K562 (cell line): ENCODE measurements at regions of chr1 and their contacts with region 1.

Region 1: DNA sequence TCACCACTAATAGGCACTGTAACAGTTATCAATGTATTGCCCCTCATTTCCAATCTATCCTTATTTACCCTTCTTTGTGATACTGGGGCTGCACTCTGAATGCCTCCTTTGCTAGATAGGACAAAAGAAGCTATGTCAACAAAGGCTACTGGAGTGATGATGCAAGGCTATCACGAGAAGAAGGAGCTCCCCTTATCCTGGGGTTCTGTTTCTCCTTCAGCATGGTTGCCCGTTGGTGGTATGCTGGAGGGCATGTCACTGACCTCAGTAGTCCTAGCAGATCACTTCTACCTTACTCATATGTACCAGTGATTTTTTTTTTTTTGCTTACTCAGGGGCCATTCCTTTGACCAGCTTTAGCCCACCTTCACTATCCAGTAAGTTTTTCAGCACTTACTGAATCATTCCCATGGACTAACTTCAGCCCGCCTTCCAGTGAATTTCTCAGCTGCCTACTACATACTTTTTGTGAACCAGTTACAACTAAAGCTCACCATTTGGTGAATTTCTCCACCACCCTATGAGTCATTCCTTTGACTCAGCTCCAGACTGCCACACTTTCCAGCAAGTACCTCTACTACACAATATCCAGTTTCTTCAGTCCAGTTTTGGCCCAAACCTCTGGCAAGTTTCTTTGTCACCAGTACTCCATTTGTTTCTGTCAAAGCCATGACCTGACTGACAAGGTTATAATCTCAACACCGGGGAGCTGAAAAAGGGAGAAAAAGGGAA is 944.5 kb downstream of the KCNT2 start:
- DNase-seq: peak in 1 of 4 experiments; percentile 16
- ATAC-seq: no peak
- H3K4me3 ChIP-seq: no peak overlapping the region
- H3K27ac ChIP-seq: no peak overlapping the region
- H3K4me1 ChIP-seq: no peaks in the 10 kb centered on the region
- H3K27me3 ChIP-seq: no peaks in the 10 kb centered on the region
- CTCF ChIP-seq: no peak
- EP300 ChIP-seq: no peak
- POLR2A ChIP-seq: no peak
- RAD21 ChIP-seq: no peak

Region 2: DNA sequence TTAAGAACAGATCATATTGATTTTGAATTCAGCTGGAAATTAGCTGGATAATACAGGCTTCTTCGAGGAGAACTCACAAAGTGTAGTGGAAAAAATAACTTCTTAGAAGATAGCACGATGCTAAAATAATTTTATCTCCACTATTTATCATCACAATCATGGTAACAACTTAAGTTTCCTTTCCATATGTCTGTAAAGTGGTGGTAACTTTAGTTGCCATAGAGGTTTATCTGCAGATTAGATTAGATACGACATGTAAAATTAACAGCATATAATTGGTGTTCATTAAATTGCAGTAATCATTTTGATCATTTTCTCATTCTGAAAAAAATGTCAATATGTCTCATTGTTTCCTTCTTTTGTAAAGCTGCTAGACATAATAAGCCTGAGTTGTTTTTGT is 23.0 kb after region 1 on chr1:
- CTCF ChIA-PET with region 1: no interaction called
- POLR2A ChIA-PET with region 1: no interaction called
- in situ Hi-C with region 1: no loop called
- intact Hi-C with region 1: loop called (anchors 1 kb)
- DNase-seq: no peak
- ATAC-seq: no peak
- H3K4me3 ChIP-seq: no peak overlapping the region
- H3K27ac ChIP-seq: no peak overlapping the region
- H3K4me1 ChIP-seq: no peaks in the 10 kb centered on the region
- H3K27me3 ChIP-seq: no peaks in the 10 kb centered on the region
- CTCF ChIP-seq: no peak
- EP300 ChIP-seq: no peak
- POLR2A ChIP-seq: no peak
- RAD21 ChIP-seq: no peak

Region 3: GRCh38 chr1:195766709-195767108 is 103.0 kb after region 1 on chr1:
- CTCF ChIA-PET with region 1: no interaction called
- POLR2A ChIA-PET with region 1: no interaction called
- in situ Hi-C with region 1: no loop called
- intact Hi-C with region 1: no loop called
- DNase-seq: peak in 1 of 4 experiments; percentile 20
- ATAC-seq: no peak
- H3K4me3 ChIP-seq: no peak overlapping the region
- H3K27ac ChIP-seq: no peak overlapping the region; the same call in 2 of the 3 replicates
- H3K4me1 ChIP-seq: peaks cover 0 to 5% of the 10 kb centered on the region in 2 experiments; a peak in 2 of 5 replicates
- H3K27me3 ChIP-seq: no peaks in the 10 kb centered on the region
- CTCF ChIP-seq: no peak
- EP300 ChIP-seq: no peak
- POLR2A ChIP-seq: no peak
- RAD21 ChIP-seq: no peak